ENCODE measurements at regions of chr12 and their contacts with region 1.

Region 1: GRCh38 chr12:105352052-105352451 is 21.6 kb downstream of the C12orf75 start:
- DNase-seq: peak; percentile 60
- ATAC-seq: peak; percentile 50
- H3K4me3 Mint-ChIP-seq: peak overlapping the region; percentile 12
- H3K27ac Mint-ChIP-seq: peak overlapping the region; percentile 71
- H3K4me1 Mint-ChIP-seq: peaks cover 73% of the 10 kb centered on the region
- H3K27me3 Mint-ChIP-seq: no peaks in the 10 kb centered on the region

Region 2: DNA sequence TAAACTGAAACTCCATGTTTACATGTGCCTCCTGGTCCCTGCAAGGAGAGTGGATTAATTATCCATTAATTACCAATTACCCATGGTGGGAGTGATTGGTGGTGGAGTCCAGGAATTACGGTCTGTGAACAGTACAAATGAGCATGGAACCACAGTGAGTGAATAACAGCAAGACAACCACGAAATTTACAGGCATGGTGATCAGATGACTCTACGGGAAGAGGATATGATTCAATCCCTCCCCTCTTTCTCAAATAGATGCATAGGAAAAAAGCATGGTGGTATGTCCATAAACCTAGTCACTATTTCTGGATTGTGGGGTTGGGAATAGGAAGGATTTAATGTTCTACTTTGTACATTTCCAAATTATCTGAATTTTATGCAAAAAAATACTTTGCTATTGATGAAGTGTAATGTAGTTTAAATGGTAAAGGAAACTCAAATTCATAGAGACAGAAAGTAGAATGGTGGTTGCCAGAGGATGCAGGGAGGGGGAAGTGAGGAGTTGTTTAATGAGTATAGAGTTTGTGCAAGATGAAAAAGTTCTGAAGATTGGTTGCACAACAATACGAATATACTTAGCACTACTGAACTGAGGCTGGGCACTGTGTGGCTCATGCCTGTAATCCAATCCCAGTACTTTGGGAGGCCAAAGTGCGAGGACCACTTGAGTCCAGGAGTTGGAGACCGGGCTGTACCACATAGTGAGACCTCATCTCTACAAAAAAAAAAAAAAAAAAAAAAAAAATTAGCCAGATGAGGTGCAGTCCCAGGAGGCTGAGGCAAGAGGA is 62.7 kb before region 1 on chr12:
- CTCF ChIA-PET with region 1: no interaction called
- DNase-seq: no peak
- ATAC-seq: no peak
- H3K4me3 Mint-ChIP-seq: no peak overlapping the region
- H3K27ac Mint-ChIP-seq: no peak overlapping the region
- H3K4me1 Mint-ChIP-seq: no peaks in the 10 kb centered on the region
- H3K27me3 Mint-ChIP-seq: peaks cover 22% of the 10 kb centered on the region

Region 3: DNA sequence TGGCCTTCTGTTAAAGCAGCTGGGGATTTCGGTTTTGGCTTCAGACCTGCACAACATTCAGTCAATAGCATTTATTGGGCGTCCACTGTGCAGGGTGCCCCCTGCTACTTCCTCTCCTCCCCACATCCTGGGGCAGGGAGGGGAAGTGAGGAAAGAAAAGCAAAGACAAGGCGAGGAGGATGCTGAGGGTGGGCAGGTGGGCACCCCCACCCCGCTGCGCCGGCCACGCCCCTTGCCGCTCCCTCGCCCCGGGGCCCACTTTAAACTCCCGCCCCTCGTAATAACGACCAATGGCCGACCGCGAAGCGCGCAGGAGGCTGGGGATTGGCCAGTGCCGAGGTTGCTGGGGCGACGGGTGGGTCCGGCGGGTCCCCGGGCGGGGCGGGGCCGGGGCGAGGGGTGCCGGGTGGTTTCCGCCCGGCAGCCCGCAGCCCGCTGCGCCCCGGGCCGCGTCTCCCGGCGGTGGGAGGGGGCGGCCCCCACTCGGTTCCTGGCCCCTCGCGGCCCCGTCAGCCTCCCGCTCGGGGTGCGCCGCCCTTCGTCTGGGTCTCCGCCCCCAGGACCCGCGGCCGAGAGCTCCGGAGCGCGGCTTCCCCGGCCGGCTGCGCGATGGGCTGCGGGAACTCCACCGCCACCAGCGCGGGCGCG is 21.6 kb before region 1 on chr12 and contains the start of gene C12orf75:
- CTCF ChIA-PET with region 1: interaction called, 11 read pairs
- DNase-seq: peak; percentile 97
- ATAC-seq: peak; percentile 86
- H3K4me3 Mint-ChIP-seq: peak within 1 kb of the TSS; percentile 95
- H3K27ac Mint-ChIP-seq: peak within 1 kb of the TSS; percentile 89
- H3K4me1 Mint-ChIP-seq: peaks cover 78% of the 10 kb centered on the region
- H3K27me3 Mint-ChIP-seq: no peaks in the 10 kb centered on the region
- total RNA-seq, gene C12orf75: 277 to 318 TPM

Region 4: DNA sequence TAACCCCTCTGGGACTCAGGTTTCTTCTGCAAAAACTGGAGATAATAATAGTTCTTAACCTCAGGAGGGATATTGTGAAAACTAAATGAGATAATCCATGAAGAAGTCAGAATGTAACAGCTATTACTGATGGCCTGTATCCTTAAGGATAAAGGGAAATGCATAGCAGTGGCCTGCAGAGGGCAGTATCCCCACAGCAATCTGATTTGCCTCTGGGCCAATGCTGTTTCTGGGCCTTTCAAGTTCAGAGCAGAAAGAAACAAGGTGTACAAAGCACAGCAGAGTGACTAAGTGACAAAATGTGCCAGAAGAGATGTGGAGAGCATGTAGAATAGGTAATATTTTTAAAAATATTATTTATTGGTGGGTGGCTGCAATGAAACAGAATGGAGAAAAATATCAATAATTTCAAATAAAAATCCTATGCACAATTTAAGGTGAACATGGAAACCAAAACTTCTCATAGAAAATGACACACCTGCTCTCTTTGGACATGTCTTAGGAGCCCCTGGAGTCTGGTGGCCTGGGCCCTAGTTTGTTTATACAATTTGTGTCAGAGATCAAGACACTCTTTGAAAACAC is 68.7 kb after region 1 on chr12:
- CTCF ChIA-PET with region 1: no interaction called
- DNase-seq: peak; percentile 74
- ATAC-seq: peak; percentile 74
- H3K4me3 Mint-ChIP-seq: no peak overlapping the region
- H3K27ac Mint-ChIP-seq: no peak overlapping the region
- H3K4me1 Mint-ChIP-seq: peaks cover 2% of the 10 kb centered on the region
- H3K27me3 Mint-ChIP-seq: peaks cover 2% of the 10 kb centered on the region